Caco-2 (cell line): ENCODE measurements at regions of chr10 and their contacts with region 1.

Region 1: GRCh38 chr10:32938554-32939061 is 19.4 kb downstream of the ITGB1 start:
- DNase-seq: peak in 1 of 2 experiments; percentile 59
- H3K4me3 ChIP-seq: no peak overlapping the region
- H3K4me3 Mint-ChIP-seq: peak overlapping the region; percentile 40
- H3K27ac Mint-ChIP-seq: peak overlapping the region; percentile 70
- H3K4me1 ChIP-seq: peaks cover 29% of the 10 kb centered on the region
- H3K4me1 Mint-ChIP-seq: peaks cover 33% of the 10 kb centered on the region
- H3K27me3 ChIP-seq: no peaks in the 10 kb centered on the region
- H3K27me3 Mint-ChIP-seq: no peaks in the 10 kb centered on the region
- CTCF ChIP-seq: no peak

Region 2: GRCh38 chr10:32980558-32981468 is 42.2 kb after region 1 on chr10:
- CTCF ChIA-PET with region 1: interaction called, 8 read pairs
- POLR2A ChIA-PET with region 1: interaction called, 12 read pairs
- intact Hi-C with region 1: loop called (anchors 1 kb)
- DNase-seq: peak; percentile 92 to 96
- H3K4me3 ChIP-seq: peak overlapping the region; percentile 41
- H3K4me3 Mint-ChIP-seq: peak overlapping the region; percentile 94
- H3K27ac Mint-ChIP-seq: peak overlapping the region; percentile 97
- H3K4me1 ChIP-seq: peaks cover 42% of the 10 kb centered on the region
- H3K4me1 Mint-ChIP-seq: peaks cover 27% of the 10 kb centered on the region
- H3K27me3 ChIP-seq: no peaks in the 10 kb centered on the region
- H3K27me3 Mint-ChIP-seq: no peaks in the 10 kb centered on the region
- CTCF ChIP-seq: no peak